Heart left ventricle (tissue), 16 donors: ENCODE measurements at regions of chr2 and their contacts with region 1.

Region 1: GRCh38 chr2:197416268-197416667 is 18.6 kb downstream of the SF3B1 start:
- DNase-seq: no peak
- ATAC-seq: no peak
- H3K4me3 ChIP-seq: no peak overlapping the region
- H3K27ac ChIP-seq: no peak overlapping the region
- H3K4me1 ChIP-seq: peaks cover 0 to 12% (median 2%) of the 10 kb centered on the region in 12 donors
- H3K27me3 ChIP-seq: no peaks in the 10 kb centered on the region
- CTCF ChIP-seq: no peak
- POLR2A ChIP-seq: no peak

Region 2: GRCh38 chr2:197434541-197435513 is 18.6 kb after region 1 on chr2 and contains the start of gene SF3B1:
- intact Hi-C with region 1: no loop called
- DNase-seq: peak; percentile 98 to 99 (median 99)
- ATAC-seq: peak; percentile 98 to 99 (median 98)
- H3K4me3 ChIP-seq: peak within 1 kb of the TSS; percentile 63 to 99 (median 87)
- H3K27ac ChIP-seq: peak within 1 kb of the TSS; percentile 87 to 99 (median 94)
- H3K4me1 ChIP-seq: peaks cover 23 to 51% (median 45%) of the 10 kb centered on the region in 12 donors
- H3K27me3 ChIP-seq: no peaks in the 10 kb centered on the region
- CTCF ChIP-seq: no peak
- POLR2A ChIP-seq: peak in 1 of 2 donors; percentile 88
- total RNA-seq, gene SF3B1: 80.4 to 167 (median 133) TPM

Region 3: GRCh38 chr2:197461057-197461456 is 44.8 kb after region 1 on chr2:
- intact Hi-C with region 1: loop called in 1 of 10 experiments (anchors 10 kb)
- DNase-seq: no peak
- ATAC-seq: peak in 3 of 4 donors; percentile 16 to 50 (median 47)
- H3K4me3 ChIP-seq: no peak overlapping the region
- H3K27ac ChIP-seq: no peak overlapping the region
- H3K4me1 ChIP-seq: peaks cover 0 to 44% (median 19%) of the 10 kb centered on the region in 12 donors
- H3K27me3 ChIP-seq: no peaks in the 10 kb centered on the region
- CTCF ChIP-seq: no peak
- POLR2A ChIP-seq: no peak